Heart left ventricle (tissue), 16 donors: ENCODE measurements at regions of chr5 and their contacts with region 1.

Region 1: DNA sequence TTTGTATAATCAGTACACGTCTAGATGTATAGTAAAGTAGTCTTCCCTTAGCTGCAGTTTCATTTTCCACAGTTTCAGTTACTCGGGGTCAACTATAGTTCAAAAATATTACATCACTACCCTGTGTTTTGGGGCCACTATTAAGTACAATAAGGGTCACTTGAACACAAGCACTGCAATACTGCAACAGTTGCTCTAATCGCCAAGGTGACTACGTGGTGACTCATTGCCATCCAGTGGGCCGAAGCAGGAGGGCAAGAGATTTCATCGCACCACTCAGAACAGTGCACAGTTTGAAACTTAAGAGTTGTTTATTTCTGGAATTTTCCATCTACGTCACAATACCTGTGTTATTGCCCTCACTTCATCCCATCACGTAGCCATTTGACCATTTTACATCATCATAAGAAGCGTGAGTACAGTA is at the start of gene ARL14EPL:
- DNase-seq: peak in 2 of 5 donors; percentile 8 to 24
- ATAC-seq: peak in 3 of 4 donors; percentile 73 to 88 (median 88)
- H3K4me3 ChIP-seq: no peak within 1 kb of the TSS
- H3K27ac ChIP-seq: no peak within 1 kb of the TSS
- H3K4me1 ChIP-seq: peaks cover 0 to 12% (median 0%) of the 10 kb centered on the region in 12 donors
- H3K27me3 ChIP-seq: no peaks in the 10 kb centered on the region
- CTCF ChIP-seq: peak in 8 of 12 donors; percentile 7 to 42 (median 29)
- POLR2A ChIP-seq: no peak
- total RNA-seq, gene ARL14EPL: not detected

Region 2: DNA sequence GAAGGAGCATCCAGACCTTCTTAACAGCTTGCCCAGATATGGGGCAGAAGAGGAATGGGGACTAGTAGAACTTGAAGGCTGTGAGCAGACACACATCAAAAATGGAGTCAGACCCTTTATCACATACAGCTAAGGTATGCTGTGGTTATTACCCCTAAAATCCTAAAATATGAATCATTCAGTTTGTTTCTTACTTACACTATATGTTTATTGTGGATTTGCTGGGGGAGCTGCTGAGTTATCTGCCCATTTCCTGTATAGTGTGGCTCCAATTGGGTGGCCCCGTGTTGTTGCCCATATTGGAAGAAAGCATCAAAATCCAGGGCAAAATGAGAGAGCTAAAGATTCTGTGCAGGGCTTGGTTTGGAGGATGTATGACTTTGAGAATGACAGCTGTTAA is 133.4 kb before region 1 on chr5:
- intact Hi-C with region 1: loop called in 1 of 10 experiments (anchors 10 kb)
- DNase-seq: no peak
- ATAC-seq: no peak
- H3K4me3 ChIP-seq: no peak overlapping the region
- H3K27ac ChIP-seq: no peak overlapping the region
- H3K4me1 ChIP-seq: no peaks in the 10 kb centered on the region
- H3K27me3 ChIP-seq: no peaks in the 10 kb centered on the region
- CTCF ChIP-seq: no peak
- POLR2A ChIP-seq: no peak